CD4-positive, alpha-beta memory T cell (primary cell): ENCODE measurements at regions of chr15 and their contacts with region 1.

Region 1: DNA sequence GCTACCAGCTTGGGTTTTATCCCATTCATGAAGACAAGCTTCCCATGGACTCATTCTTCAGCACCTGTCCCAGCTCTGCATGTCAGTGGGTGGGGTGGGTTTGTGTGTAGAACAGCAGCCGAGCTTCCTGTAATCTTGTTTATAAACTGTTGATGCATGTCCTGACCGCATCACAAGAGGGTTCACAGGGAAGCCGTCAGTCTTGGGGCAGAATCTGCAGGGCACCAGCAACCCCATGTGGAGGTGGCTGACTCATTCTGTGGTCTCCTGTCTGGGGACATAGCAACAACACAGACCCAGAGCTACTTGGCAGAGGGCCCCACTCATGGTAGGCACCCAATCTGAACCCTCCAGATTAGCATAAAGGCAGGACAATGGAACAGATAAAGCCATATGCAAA is 35.6 kb downstream of the DAPK2 start:
- DNase-seq: peak; percentile 89 to 98 (median 93)
- H3K4me3 ChIP-seq: no peak overlapping the region
- H3K4me3 Mint-ChIP-seq: peak overlapping the region in 7 of 8 donors; percentile 74 to 89 (median 79)
- H3K27ac ChIP-seq: peak overlapping the region; percentile 64
- H3K27ac Mint-ChIP-seq: peak overlapping the region; percentile 91 to 100 (median 99)
- H3K4me1 ChIP-seq: peaks cover 47% of the 10 kb centered on the region
- H3K4me1 Mint-ChIP-seq: peaks cover 32 to 49% (median 40%) of the 10 kb centered on the region in 4 donors
- H3K27me3 ChIP-seq: no peaks in the 10 kb centered on the region
- H3K27me3 Mint-ChIP-seq: no peaks in the 10 kb centered on the region

Region 2: GRCh38 chr15:63826528-63826927 is 184.2 kb before region 1 on chr15:
- CTCF ChIA-PET with region 1: interaction called, 32 read pairs
- POLR2A ChIA-PET with region 1: interaction called, 18 read pairs
- intact Hi-C with region 1: loop called (anchors 1 kb)
- DNase-seq: peak; percentile 34 to 49 (median 43)
- H3K4me3 ChIP-seq: no peak overlapping the region
- H3K4me3 Mint-ChIP-seq: peak overlapping the region in 4 of 8 donors; percentile 29 to 43 (median 40)
- H3K27ac ChIP-seq: no peak overlapping the region
- H3K27ac Mint-ChIP-seq: peak overlapping the region in 6 of 7 donors; percentile 36 to 85 (median 74)
- H3K4me1 ChIP-seq: peaks cover 75% of the 10 kb centered on the region
- H3K4me1 Mint-ChIP-seq: peaks cover 62 to 86% (median 74%) of the 10 kb centered on the region in 4 donors
- H3K27me3 ChIP-seq: no peaks in the 10 kb centered on the region
- H3K27me3 Mint-ChIP-seq: no peaks in the 10 kb centered on the region

Region 3: DNA sequence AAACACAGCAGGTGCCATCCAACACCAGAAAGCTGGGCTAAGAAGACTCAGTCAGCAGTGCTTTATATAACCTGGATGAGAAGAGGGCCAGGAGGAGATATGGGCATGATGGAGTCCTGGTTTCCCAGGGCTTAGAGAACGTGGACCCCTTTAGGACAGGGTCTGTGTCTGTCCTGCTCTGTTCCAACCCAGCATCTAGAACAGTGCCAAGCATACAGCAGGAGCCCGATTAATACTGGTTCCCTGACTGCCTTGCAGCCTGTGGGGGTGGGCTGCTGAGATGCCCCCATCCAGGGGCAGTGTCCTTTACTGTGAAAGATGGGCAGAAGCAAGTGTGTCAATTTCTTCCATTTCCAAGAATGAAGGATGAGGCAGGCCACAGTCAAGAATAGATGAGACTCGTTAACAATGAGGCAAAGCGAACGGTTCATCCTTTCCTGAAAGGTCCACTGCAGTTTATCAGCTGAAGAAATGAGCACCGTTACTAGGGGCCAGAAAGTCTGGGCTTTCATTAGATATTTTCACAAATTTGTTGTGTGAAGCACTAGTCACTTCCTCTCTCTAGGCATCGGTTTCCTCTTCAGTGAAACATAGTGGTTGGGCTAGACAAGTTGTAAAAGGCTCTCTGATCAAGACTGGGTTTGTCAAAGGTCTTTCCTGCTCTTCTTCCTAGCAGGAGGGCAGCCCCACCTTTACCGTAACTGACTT is 105.0 kb before region 1 on chr15:
- CTCF ChIA-PET with region 1: interaction called, 7 read pairs
- POLR2A ChIA-PET with region 1: interaction called, 11 read pairs
- intact Hi-C with region 1: no loop called
- DNase-seq: peak in 4 of 5 donors; percentile 25 to 38 (median 30)
- H3K4me3 ChIP-seq: no peak overlapping the region
- H3K4me3 Mint-ChIP-seq: peak overlapping the region in 7 of 8 donors; percentile 8 to 65 (median 50)
- H3K27ac ChIP-seq: peak overlapping the region; percentile 34
- H3K27ac Mint-ChIP-seq: peak overlapping the region; percentile 73 to 95 (median 92)
- H3K4me1 ChIP-seq: peaks cover 22% of the 10 kb centered on the region
- H3K4me1 Mint-ChIP-seq: peaks cover 13 to 28% (median 22%) of the 10 kb centered on the region in 4 donors
- H3K27me3 ChIP-seq: no peaks in the 10 kb centered on the region
- H3K27me3 Mint-ChIP-seq: no peaks in the 10 kb centered on the region

Region 4: DNA sequence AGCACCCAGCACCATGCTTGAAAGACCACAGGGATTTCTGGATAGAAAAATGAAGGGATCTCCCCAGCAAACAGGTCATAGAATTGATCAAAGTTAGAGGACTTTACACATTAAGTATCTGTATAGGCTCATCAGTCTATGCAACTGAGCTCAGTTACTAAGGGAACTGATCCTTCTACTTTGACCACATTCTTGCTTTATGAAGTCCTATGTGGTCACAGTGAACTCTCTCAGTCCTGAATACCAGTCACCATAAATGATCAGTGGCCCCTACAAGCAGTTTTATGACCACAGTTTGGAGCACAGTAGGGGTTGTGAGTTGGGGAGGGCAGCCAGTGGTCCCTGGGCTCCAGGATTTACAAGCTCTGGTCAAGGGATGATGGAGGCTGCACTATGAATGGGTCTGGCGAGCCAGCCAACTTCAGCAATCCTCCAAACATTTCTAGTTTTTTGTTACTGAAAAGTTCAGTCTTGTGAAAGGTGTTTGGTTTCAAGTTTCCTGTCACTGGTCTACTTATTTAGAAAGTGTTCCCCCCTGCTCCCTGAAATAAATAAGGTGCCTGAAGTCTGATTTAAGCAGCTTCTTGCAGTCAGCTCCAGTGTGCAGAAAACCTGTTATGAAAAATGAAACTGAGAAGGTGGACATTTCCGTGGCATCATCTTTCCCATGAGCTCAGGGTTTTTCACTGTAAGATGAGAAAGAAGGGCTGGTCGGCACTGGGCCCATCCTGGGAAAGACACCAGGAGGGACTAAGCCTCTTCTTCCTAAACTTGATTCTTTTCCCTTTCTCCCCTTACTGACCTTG is 39.9 kb before region 1 on chr15:
- CTCF ChIA-PET with region 1: interaction called, 14 read pairs
- POLR2A ChIA-PET with region 1: interaction called, 26 read pairs
- intact Hi-C with region 1: loop called (anchors 1 kb)
- DNase-seq: peak; percentile 7 to 58 (median 19)
- H3K4me3 ChIP-seq: peak overlapping the region in 1 of 2 donors; percentile 4
- H3K4me3 Mint-ChIP-seq: peak overlapping the region; percentile 8 to 91 (median 78)
- H3K27ac ChIP-seq: peak overlapping the region; percentile 34
- H3K27ac Mint-ChIP-seq: peak overlapping the region; percentile 84 to 99 (median 95)
- H3K4me1 ChIP-seq: peaks cover 37% of the 10 kb centered on the region
- H3K4me1 Mint-ChIP-seq: peaks cover 22 to 50% (median 33%) of the 10 kb centered on the region in 4 donors
- H3K27me3 ChIP-seq: no peaks in the 10 kb centered on the region
- H3K27me3 Mint-ChIP-seq: no peaks in the 10 kb centered on the region

Region 5: GRCh38 chr15:64067564-64068030 is 56.9 kb after region 1 on chr15:
- CTCF ChIA-PET with region 1: interaction called, 10 read pairs
- POLR2A ChIA-PET with region 1: interaction called, 7 read pairs
- intact Hi-C with region 1: no loop called
- DNase-seq: peak; percentile 65 to 73 (median 66)
- H3K4me3 ChIP-seq: no peak overlapping the region
- H3K4me3 Mint-ChIP-seq: no peak overlapping the region
- H3K27ac ChIP-seq: no peak overlapping the region
- H3K27ac Mint-ChIP-seq: peak overlapping the region in 3 of 7 donors; percentile 43 to 77 (median 66)
- H3K4me1 ChIP-seq: peaks cover 9% of the 10 kb centered on the region
- H3K4me1 Mint-ChIP-seq: peaks cover 4 to 8% (median 5%) of the 10 kb centered on the region in 4 donors
- H3K27me3 ChIP-seq: no peaks in the 10 kb centered on the region
- H3K27me3 Mint-ChIP-seq: no peaks in the 10 kb centered on the region

Region 6: GRCh38 chr15:64216730-64217428 is 206.2 kb after region 1 on chr15:
- CTCF ChIA-PET with region 1: no interaction called
- POLR2A ChIA-PET with region 1: no interaction called
- intact Hi-C with region 1: no loop called
- DNase-seq: no peak
- H3K4me3 ChIP-seq: no peak overlapping the region
- H3K4me3 Mint-ChIP-seq: no peak overlapping the region
- H3K27ac ChIP-seq: no peak overlapping the region
- H3K27ac Mint-ChIP-seq: no peak overlapping the region
- H3K4me1 ChIP-seq: no peaks in the 10 kb centered on the region
- H3K4me1 Mint-ChIP-seq: peaks cover 2 to 7% (median 4%) of the 10 kb centered on the region in 4 donors
- H3K27me3 ChIP-seq: no peaks in the 10 kb centered on the region
- H3K27me3 Mint-ChIP-seq: no peaks in the 10 kb centered on the region